Transverse colon (tissue), 4 donors: ENCODE measurements at regions of chr6 and their contacts with region 1.

Region 1: DNA sequence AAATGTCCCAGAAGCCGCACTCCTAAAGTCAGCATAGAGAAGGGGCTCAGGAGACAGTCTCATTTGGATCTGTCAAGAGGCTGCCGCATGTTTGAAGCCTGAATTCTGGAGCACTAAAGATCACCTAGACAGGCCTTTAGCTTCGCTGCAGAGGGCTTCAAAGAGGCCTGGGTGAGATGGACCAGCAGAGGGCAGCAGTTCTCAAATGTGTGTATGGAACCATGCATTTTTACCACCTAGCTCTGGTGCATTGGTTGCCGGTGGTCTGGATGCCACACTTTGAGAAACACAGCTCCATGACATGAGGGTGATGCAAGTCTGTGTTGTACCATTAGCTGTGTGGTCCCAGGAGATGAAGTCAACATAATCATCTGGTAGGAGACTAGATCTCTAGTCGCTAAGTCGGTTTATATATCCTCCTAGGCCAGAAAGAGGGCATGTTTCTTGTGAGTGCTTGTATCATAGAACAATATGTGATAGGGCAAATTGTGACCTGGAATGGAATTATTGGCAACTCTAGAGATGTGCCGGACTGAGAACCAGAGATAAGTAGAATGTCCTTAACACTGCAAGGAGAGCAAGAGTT is 64.8 kb downstream of the KIAA0319 start:
- DNase-seq: peak; percentile 81
- H3K4me3 ChIP-seq: no peak overlapping the region
- H3K27ac ChIP-seq: no peak overlapping the region
- H3K4me1 ChIP-seq: peaks cover 0 to 10% (median 5%) of the 10 kb centered on the region in 4 donors
- H3K27me3 ChIP-seq: no peaks in the 10 kb centered on the region
- CTCF ChIP-seq: peak; percentile 66 to 80 (median 76)
- EP300 ChIP-seq: no peak
- POLR2A ChIP-seq: no peak

Region 2: DNA sequence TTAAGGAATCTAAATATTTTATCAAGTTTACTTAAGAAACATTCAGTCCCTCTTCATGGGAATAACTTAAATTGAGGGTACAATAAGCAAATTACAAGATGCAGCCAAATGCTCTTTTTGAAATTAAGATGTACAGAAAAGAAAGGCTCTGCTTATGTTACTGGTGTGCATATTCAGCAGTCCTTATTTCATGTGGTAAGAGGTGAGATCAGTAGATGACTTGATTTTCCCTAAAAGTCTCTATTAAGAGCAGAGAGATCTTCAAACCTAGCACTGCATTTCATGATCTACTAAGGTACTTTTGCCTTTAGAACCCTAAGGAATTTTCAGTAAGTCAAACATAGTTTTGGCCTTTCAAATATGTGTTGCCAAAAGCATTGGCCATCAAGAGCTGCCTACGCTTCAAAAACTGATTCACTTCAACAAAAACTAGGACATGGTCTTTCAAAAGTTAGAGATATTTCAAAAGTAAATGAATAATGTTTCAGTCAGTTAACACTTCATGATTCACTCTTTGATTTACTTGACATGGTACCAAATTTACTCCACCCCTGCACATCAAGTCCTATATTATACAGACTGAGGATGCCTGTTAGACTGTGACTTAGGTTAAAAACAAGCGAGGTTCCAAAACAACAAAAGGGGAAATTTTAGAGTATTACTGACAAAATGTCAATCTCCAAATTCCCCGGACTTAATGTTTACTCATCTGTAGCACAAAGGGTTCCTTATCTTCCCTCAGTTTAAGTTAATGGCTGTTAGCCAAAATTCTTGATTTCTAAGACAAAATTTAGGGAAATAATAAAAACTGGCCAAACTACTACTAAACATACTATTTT is 118.6 kb after region 1 on chr6:
- in situ Hi-C with region 1: loop called (anchors 5 kb)
- intact Hi-C with region 1: no loop called
- DNase-seq: no peak
- H3K4me3 ChIP-seq: no peak overlapping the region
- H3K27ac ChIP-seq: no peak overlapping the region
- H3K4me1 ChIP-seq: peaks cover 0 to 3% (median 0%) of the 10 kb centered on the region in 4 donors
- H3K27me3 ChIP-seq: no peaks in the 10 kb centered on the region
- CTCF ChIP-seq: no peak
- EP300 ChIP-seq: no peak
- POLR2A ChIP-seq: no peak

Region 3: GRCh38 chr6:24766680-24767462 is 185.7 kb after region 1 on chr6:
- in situ Hi-C with region 1: loop called in 3 of 4 experiments (anchors 5 to 25 kb)
- intact Hi-C with region 1: loop called (anchors 10 kb)
- DNase-seq: no peak
- H3K4me3 ChIP-seq: no peak overlapping the region
- H3K27ac ChIP-seq: no peak overlapping the region
- H3K4me1 ChIP-seq: peaks cover 0 to 12% (median 0%) of the 10 kb centered on the region in 4 donors
- H3K27me3 ChIP-seq: no peaks in the 10 kb centered on the region
- CTCF ChIP-seq: peak; percentile 35 to 55 (median 43)
- EP300 ChIP-seq: no peak
- POLR2A ChIP-seq: no peak